ENCODE measurements at regions of chr10 and their contacts with region 1.

Region 1: DNA sequence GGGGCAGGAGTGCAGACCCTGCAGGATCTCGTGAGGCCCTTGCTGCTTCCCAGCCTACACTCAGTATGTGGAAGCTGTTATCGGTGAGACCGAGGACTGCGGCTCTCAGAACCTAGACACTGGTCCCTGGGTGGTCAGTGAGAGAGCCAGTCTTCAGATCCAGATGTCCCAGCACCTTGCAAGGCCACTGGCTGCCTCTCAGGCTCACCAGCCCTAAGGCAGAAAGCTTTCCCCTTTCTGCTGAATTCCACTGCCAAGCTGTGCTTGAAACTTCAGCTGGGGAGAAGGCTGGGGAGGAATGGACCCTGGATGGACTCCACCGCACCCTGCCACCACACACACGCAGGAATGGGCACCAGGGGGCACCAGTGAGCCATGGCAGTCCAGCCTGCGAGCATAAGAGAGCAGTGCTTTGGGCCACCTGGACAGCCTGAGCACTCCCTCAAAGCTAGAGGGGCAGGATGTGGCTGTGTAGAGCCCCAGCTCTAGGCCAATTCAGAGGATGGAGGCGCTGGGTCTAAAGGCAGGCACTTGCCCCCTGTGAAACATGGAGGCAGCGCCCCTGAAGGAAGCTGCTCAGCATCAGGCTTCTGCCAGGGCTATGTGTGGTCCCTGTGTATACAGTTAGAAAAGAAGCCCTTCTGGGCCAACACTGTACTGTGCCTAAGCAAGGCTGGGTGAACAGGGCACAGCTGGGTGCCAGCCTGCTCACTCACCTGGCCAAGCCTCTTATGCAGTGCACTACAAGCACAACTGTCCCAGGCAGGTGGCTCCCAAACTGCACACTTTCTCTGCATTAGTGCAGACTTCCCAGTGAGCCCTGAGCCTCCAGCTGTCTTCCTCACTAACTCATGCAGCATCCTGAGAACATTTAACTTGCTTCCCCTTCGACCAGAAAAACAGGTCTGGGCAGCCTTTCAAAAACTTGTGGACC is 21.6 kb downstream of the TMEM72 start:
- DNase-seq: peak; percentile 12
- H3K4me3 ChIP-seq: no peak overlapping the region
- CTCF ChIP-seq: peak; percentile 100

Region 2: DNA sequence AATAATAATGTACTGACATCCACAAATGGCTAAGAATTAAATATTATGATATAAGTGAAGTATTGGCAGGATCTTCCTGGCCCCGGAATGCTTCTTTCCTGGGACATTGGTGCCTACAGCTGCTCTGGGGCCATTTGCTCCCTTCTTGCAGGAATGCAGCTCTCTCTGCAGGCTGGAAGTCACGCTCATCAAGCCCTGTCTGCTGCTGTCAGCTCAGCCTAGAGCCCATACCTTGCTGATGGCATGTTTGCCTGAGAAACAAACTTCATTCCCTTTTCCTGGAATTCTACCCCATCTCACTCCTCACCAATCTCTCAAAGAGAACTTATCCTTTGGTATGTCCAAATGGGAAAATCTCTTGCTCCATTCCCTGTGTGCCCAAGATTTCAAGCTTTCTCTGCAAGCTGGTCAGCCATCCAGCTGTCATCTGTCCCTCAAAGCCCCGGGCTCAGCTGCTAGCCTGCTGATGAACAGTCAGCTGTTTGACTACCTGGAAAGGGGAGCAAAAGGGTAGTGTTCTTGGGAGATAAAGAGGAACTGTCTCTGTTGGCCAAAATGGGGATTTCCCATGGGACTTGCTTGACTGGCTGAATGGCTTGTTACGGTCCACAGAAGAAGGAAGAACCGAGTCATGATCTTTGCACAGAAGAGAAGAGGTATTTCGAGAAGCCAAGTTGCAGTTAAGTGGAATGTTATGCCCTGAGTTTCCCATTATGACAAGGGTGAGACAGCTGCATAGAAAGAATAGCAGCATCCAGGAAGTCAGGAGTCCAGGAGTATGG is 14.8 kb after region 1 on chr10:
- CTCF ChIA-PET with region 1: interaction called, 77 read pairs
- POLR2A ChIA-PET with region 1: no interaction called
- DNase-seq: no peak
- H3K4me3 ChIP-seq: no peak overlapping the region
- CTCF ChIP-seq: no peak

Region 3: GRCh38 chr10:44962870-44963738 is 30.3 kb after region 1 on chr10:
- CTCF ChIA-PET with region 1: interaction called, 18 read pairs
- POLR2A ChIA-PET with region 1: no interaction called
- DNase-seq: no peak
- H3K4me3 ChIP-seq: no peak overlapping the region
- CTCF ChIP-seq: peak; percentile 21

Region 4: DNA sequence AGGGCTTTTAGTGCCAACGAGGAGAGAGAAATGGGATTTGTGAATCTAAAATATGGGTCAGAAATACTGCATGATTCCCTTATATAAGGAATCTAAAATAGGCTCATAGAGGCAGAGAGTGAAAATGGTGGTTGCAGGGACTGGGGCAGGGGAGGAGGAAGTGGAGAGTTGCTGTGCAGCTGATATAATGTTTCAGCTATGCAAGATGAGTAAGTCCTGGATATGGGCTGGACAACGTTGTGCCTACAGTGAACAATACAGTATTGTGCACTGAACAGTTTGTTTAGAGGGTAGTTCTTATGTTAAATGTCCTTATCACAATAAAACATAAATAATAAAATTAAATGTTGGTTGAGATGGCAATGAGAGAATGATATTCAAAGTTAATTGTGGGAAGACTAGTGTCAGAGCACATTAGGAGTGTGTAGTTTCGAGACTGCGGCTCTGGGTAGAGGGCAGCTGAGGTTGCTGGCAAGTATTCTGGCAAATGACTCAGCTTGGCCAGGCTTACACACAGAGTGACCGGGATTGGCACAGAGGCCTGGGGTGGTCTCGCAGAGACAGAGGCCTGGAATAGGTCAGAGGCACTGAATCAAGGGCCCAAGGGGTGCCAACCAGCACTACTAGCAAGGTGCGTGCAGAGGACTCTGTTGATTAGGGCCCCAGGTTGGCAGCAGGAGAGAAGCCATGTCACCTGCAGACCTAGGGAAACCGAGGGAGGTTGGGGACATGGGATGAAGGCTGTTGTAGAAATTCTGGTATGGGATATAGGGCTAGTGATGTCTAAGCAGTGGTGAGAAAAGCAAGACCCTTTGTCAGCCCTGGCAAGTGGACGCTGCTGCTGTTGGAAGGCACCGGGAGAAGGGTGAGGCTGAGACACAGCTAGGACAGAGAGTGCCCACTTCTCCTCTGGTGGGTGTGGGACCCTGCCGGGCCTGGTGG is 48.7 kb after region 1 on chr10:
- CTCF ChIA-PET with region 1: interaction called, 20 read pairs
- POLR2A ChIA-PET with region 1: interaction called, 9 read pairs
- DNase-seq: no peak
- H3K4me3 ChIP-seq: no peak overlapping the region
- CTCF ChIP-seq: no peak

Region 5: GRCh38 chr10:45008524-45009161 is 75.9 kb after region 1 on chr10:
- CTCF ChIA-PET with region 1: interaction called, 95 read pairs
- POLR2A ChIA-PET with region 1: no interaction called
- DNase-seq: peak; percentile 64
- H3K4me3 ChIP-seq: no peak overlapping the region
- CTCF ChIP-seq: peak; percentile 59